HepG2 (cell line): ENCODE measurements at regions of chr13 and their contacts with region 1.

Region 1: DNA sequence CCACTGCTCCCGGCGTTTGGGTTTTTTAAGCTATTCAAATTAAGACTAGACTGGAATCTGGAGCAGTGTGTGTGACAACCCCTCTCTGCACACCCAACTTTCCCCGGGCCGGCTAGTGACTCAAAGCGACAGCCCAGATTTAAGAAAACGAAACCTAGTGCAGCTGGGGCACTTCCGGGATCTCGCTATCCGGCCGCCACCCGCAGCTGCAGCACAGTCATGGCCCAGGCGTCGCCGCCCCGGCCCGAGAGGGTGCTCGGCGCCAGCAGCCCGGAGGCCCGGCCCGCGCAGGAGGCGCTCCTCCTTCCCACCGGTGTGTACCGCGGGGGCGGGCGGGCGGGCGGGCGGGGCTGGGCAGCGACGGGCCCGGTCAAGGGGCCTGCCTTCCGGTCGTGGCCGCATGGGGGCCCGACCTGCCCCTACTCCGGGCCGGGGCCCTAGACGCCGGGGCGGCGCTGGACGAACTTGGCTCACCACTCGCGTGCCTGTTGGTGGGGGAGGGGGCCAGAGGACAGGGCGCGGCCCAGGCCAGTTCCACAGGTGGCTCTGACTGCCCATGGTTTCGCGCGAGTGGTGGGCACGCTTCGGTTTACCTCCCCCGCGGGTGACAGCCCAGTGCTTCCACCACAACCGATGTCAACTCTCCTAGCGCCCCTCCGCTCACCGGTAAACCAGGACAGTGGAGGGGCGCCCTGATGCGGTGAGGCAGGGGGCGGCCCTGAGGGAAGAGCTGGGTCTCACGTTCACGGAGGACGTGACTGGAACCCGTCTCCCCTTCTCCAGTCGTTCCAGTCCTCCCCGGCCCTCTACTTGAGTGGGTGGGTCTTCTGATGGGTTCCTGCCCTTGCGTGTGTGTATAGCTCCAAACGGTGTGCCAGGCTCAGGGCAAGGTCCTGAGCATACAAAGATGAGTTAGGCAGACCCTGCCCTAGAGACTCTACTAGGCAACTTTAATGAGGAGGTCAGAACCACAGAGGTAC is at the start of gene PHF11:
- DNase-seq: peak; percentile 63
- ATAC-seq: peak; percentile 90
- H3K4me3 ChIP-seq: peak within 1 kb of the TSS; percentile 65 to 77 (median 75)
- H3K27ac ChIP-seq: peak within 1 kb of the TSS; percentile 95
- H3K4me1 ChIP-seq: peaks cover 21% of the 10 kb centered on the region
- H3K27me3 ChIP-seq: no peaks in the 10 kb centered on the region
- CTCF ChIP-seq: peak; percentile 42; the same call in 1 of the 2 replicates
- EP300 ChIP-seq: no peak
- POLR2A ChIP-seq: peak; percentile 7 to 68; a peak in 3 of 4 replicates
- RAD21 ChIP-seq: peak; percentile 35; the same call in 1 of the 2 replicates
- total RNA-seq, gene PHF11: 9.0 and 15.8 TPM in 2 replicates

Region 2: GRCh38 chr13:49171358-49171757 is 324.7 kb before region 1 on chr13:
- CTCF ChIA-PET with region 1: no interaction called
- POLR2A ChIA-PET with region 1: no interaction called
- in situ Hi-C with region 1: no loop called
- intact Hi-C with region 1: no loop called
- DNase-seq: no peak
- ATAC-seq: no peak
- H3K4me3 ChIP-seq: no peak overlapping the region
- H3K27ac ChIP-seq: no peak overlapping the region
- H3K4me1 ChIP-seq: no peaks in the 10 kb centered on the region
- H3K27me3 ChIP-seq: no peaks in the 10 kb centered on the region
- CTCF ChIP-seq: no peak
- EP300 ChIP-seq: no peak
- POLR2A ChIP-seq: no peak
- RAD21 ChIP-seq: no peak

Region 3: DNA sequence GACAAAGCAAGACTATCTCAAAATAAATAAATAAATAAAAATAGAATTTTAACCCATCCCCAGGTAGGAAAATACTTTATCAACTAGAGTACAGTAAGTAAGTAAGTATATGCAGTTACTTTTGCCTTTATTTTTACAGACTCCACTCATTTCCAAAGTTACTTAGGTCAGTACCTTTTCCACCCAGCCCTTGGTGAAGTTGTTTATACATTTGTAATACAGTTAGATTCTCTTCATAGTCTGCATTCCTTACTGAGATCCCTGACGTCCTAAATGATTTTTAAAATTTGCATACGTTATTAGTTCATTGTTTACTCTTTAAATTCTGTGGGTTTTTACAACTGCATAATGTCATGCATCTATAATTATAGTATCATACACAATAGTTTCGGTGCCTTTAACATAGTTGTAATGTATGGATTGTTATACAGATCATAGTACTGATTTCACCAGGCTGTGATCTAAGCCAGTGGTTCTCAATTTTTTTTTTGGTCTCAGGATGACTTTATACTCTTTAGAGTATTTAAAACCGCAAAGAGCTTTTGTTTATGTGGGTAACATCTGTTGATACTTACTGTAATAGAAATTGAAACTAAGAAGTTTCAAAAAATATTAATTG is 41.6 kb before region 1 on chr13:
- CTCF ChIA-PET with region 1: no interaction called
- POLR2A ChIA-PET with region 1: no interaction called
- in situ Hi-C with region 1: no loop called
- intact Hi-C with region 1: loop called (anchors 5 kb)
- DNase-seq: no peak
- ATAC-seq: no peak
- H3K4me3 ChIP-seq: no peak overlapping the region
- H3K27ac ChIP-seq: no peak overlapping the region
- H3K4me1 ChIP-seq: peaks cover 6% of the 10 kb centered on the region; the same call in 1 of the 2 replicates
- H3K27me3 ChIP-seq: no peaks in the 10 kb centered on the region
- CTCF ChIP-seq: no peak
- EP300 ChIP-seq: no peak
- POLR2A ChIP-seq: no peak
- RAD21 ChIP-seq: no peak

Region 4: DNA sequence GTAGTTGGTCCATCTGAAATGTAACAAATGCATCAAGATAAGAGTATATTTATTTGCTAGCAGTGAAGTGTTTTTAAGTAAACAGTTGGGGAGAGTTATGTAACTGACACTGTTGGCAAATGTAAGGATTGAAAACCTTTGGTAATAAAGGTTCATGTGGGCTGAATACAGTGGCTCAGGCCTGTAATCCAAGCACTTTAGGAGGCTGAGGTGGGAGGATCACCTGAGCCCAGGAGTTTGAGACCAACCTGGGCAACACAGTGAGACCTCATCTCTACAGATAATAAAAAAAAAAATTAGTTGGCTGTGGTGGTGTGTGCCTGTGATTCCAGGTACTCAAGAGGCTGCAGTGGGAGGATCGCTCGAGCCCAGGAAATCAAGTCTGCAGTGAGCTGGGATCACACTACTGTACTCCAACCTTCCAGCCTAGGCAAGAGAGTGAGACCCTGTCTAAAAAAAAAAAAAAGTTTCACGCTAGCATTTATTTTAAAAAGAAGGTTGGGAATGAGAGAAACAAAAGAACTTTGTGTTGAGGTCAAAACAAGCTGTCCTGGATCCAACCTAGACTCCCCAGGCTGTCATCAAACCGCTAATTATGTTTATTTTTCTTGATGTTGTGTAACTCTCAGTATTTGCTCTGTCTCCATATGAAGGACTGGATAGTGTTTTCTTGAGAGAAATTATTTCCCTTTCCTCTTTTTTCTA is 31.3 kb before region 1 on chr13:
- CTCF ChIA-PET with region 1: no interaction called
- POLR2A ChIA-PET with region 1: interaction called, 33 read pairs
- in situ Hi-C with region 1: no loop called
- intact Hi-C with region 1: loop called (anchors 2 kb)
- DNase-seq: peak; percentile 92
- ATAC-seq: peak; percentile 85
- H3K4me3 ChIP-seq: peak overlapping the region in 2 of 3 experiments; percentile 8 to 22; a peak in 2 of 6 replicates
- H3K27ac ChIP-seq: peak overlapping the region; percentile 96
- H3K4me1 ChIP-seq: peaks cover 40% of the 10 kb centered on the region
- H3K27me3 ChIP-seq: no peaks in the 10 kb centered on the region
- CTCF ChIP-seq: no peak
- EP300 ChIP-seq: peak in 1 of 2 experiments; percentile 85; a peak in 2 of 4 replicates
- POLR2A ChIP-seq: no peak
- RAD21 ChIP-seq: no peak

Region 5: GRCh38 chr13:49472186-49472585 is 23.9 kb before region 1 on chr13:
- CTCF ChIA-PET with region 1: no interaction called
- POLR2A ChIA-PET with region 1: interaction called, 33 read pairs
- in situ Hi-C with region 1: no loop called
- intact Hi-C with region 1: loop called (anchors 1 kb)
- DNase-seq: no peak
- ATAC-seq: no peak
- H3K4me3 ChIP-seq: no peak overlapping the region
- H3K27ac ChIP-seq: no peak overlapping the region
- H3K4me1 ChIP-seq: peaks cover 6% of the 10 kb centered on the region
- H3K27me3 ChIP-seq: no peaks in the 10 kb centered on the region
- CTCF ChIP-seq: no peak
- EP300 ChIP-seq: no peak
- POLR2A ChIP-seq: no peak
- RAD21 ChIP-seq: no peak

Region 6: GRCh38 chr13:50140581-50141374 is 644.7 kb after region 1 on chr13:
- CTCF ChIA-PET with region 1: no interaction called
- POLR2A ChIA-PET with region 1: no interaction called
- in situ Hi-C with region 1: no loop called
- intact Hi-C with region 1: no loop called
- DNase-seq: no peak
- ATAC-seq: no peak
- H3K4me3 ChIP-seq: no peak overlapping the region
- H3K27ac ChIP-seq: no peak overlapping the region
- H3K4me1 ChIP-seq: peaks cover 7% of the 10 kb centered on the region; the same call in 1 of the 2 replicates
- H3K27me3 ChIP-seq: no peaks in the 10 kb centered on the region
- CTCF ChIP-seq: no peak
- EP300 ChIP-seq: no peak
- POLR2A ChIP-seq: no peak
- RAD21 ChIP-seq: no peak